Activated naive CD4-positive, alpha-beta T cell treated with anti-CD3 and anti-CD28 coated beads for 36 hours (primary cell): ENCODE measurements at regions of chrX and their contacts with region 1.

Region 1: GRCh38 chrX:56563231-56564161 is at the start of gene UBQLN2:
- DNase-seq: peak; percentile 81
- H3K4me3 Mint-ChIP-seq: peak within 1 kb of the TSS; percentile 91
- H3K27ac Mint-ChIP-seq: peak within 1 kb of the TSS; percentile 100
- H3K4me1 Mint-ChIP-seq: peaks cover 1% of the 10 kb centered on the region
- H3K27me3 Mint-ChIP-seq: no peaks in the 10 kb centered on the region
- total RNA-seq, gene UBQLN2: 67.2 to 67.3 TPM

Region 2: DNA sequence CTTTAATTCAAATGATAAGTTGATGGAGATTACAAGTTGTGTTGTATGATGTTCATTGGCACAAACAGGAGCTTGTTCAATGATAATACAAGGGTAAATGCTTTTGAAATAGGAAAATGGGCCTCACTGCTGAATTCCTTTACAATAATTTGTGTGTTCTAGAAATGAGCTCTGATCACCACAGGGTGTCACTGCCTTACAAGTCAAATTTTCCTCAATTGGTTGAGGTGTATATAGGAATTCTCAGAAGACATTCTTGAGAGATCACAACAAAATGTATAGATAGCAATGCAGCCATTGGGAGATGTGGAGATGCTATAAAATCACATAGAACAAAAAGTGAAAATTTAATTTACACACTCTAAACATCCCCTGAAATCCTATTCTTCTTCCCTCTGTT is 281.7 kb before region 1 on chrX:
- CTCF ChIA-PET with region 1: no interaction called
- intact Hi-C with region 1: loop called (anchors 2 kb)
- DNase-seq: peak; percentile 32
- H3K4me3 Mint-ChIP-seq: no peak overlapping the region
- H3K27ac Mint-ChIP-seq: no peak overlapping the region
- H3K4me1 Mint-ChIP-seq: peaks cover 10% of the 10 kb centered on the region
- H3K27me3 Mint-ChIP-seq: no peaks in the 10 kb centered on the region

Region 3: DNA sequence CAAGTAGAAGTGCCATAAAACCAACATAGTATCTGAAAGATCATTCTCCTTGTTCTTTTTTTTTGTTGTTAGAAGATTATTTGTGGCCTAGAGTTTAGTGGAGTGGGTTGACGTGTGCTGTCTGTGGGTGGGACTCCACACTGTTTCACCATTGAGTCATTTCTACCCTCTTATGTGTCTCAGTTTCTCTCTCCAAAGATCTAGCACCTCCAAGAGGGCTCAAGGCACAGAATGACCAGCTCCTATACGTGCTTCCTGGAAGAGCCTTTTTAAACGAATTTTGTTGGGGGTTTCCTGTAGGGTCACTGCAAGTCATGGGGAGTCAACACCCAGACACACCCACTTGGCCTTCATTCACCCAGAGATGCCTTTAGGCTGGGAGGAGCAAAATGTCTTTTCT is 181.2 kb before region 1 on chrX:
- CTCF ChIA-PET with region 1: no interaction called
- intact Hi-C with region 1: loop called (anchors 1 kb)
- DNase-seq: peak; percentile 41
- H3K4me3 Mint-ChIP-seq: no peak overlapping the region
- H3K27ac Mint-ChIP-seq: peak overlapping the region; percentile 82
- H3K4me1 Mint-ChIP-seq: peaks cover 44% of the 10 kb centered on the region
- H3K27me3 Mint-ChIP-seq: no peaks in the 10 kb centered on the region

Region 4: GRCh38 chrX:56462389-56462788 is 101.1 kb before region 1 on chrX:
- CTCF ChIA-PET with region 1: no interaction called
- intact Hi-C with region 1: loop called (anchors 2 kb)
- DNase-seq: no peak
- H3K4me3 Mint-ChIP-seq: no peak overlapping the region
- H3K27ac Mint-ChIP-seq: no peak overlapping the region
- H3K4me1 Mint-ChIP-seq: peaks cover 24% of the 10 kb centered on the region
- H3K27me3 Mint-ChIP-seq: no peaks in the 10 kb centered on the region

Region 5: DNA sequence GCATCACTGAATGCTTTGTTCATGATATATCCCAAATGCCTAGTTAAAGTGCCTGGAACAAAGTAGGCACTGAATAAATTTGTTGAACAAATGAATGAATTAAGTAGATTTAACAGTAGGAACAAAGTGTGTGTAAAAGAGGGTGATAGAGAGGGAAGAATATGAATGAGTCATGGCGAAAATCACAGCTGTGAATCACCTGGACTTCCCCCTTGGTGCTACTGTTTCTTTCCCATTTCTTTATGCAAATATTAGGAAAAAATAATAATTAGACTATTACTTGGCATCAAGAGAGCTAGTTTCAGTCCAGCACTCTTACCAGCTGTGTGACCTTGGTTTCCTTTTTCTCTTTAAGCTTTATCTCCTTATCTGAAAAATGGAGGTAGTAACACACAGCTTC is 422.6 kb after region 1 on chrX:
- CTCF ChIA-PET with region 1: no interaction called
- intact Hi-C with region 1: loop called (anchors 10 kb)
- DNase-seq: peak; percentile 31
- H3K4me3 Mint-ChIP-seq: no peak overlapping the region
- H3K27ac Mint-ChIP-seq: peak overlapping the region; percentile 41
- H3K4me1 Mint-ChIP-seq: peaks cover 18% of the 10 kb centered on the region
- H3K27me3 Mint-ChIP-seq: no peaks in the 10 kb centered on the region

Region 6: GRCh38 chrX:57595381-57595811 is 1031.9 kb after region 1 on chrX:
- CTCF ChIA-PET with region 1: no interaction called
- intact Hi-C with region 1: loop called (anchors 5 kb)
- DNase-seq: no peak
- H3K4me3 Mint-ChIP-seq: peak overlapping the region; percentile 46
- H3K27ac Mint-ChIP-seq: peak overlapping the region; percentile 71
- H3K4me1 Mint-ChIP-seq: peaks cover 24% of the 10 kb centered on the region
- H3K27me3 Mint-ChIP-seq: no peaks in the 10 kb centered on the region